CD4-positive, alpha-beta memory T cell (primary cell): ENCODE measurements at regions of chr21 and their contacts with region 1.

Region 1: GRCh38 chr21:28943631-28944030 is 49.0 kb downstream of the LTN1 start:
- DNase-seq: no peak
- H3K4me3 ChIP-seq: no peak overlapping the region
- H3K4me3 Mint-ChIP-seq: no peak overlapping the region
- H3K27ac ChIP-seq: no peak overlapping the region
- H3K27ac Mint-ChIP-seq: no peak overlapping the region
- H3K4me1 ChIP-seq: no peaks in the 10 kb centered on the region
- H3K4me1 Mint-ChIP-seq: no peaks in the 10 kb centered on the region
- H3K27me3 ChIP-seq: no peaks in the 10 kb centered on the region
- H3K27me3 Mint-ChIP-seq: no peaks in the 10 kb centered on the region

Region 2: GRCh38 chr21:28516991-28517592 is 426.5 kb before region 1 on chr21:
- CTCF ChIA-PET with region 1: interaction called, 23 read pairs
- POLR2A ChIA-PET with region 1: no interaction called
- intact Hi-C with region 1: loop called (anchors 1 kb)
- DNase-seq: peak; percentile 53 to 57 (median 55)
- H3K4me3 ChIP-seq: no peak overlapping the region
- H3K4me3 Mint-ChIP-seq: no peak overlapping the region
- H3K27ac ChIP-seq: no peak overlapping the region
- H3K27ac Mint-ChIP-seq: no peak overlapping the region
- H3K4me1 ChIP-seq: no peaks in the 10 kb centered on the region
- H3K4me1 Mint-ChIP-seq: peaks cover 0 to 6% (median under 1%) of the 10 kb centered on the region in 4 donors
- H3K27me3 ChIP-seq: no peaks in the 10 kb centered on the region
- H3K27me3 Mint-ChIP-seq: peaks cover 0 to 1% of the 10 kb centered on the region in 2 donors

Region 3: DNA sequence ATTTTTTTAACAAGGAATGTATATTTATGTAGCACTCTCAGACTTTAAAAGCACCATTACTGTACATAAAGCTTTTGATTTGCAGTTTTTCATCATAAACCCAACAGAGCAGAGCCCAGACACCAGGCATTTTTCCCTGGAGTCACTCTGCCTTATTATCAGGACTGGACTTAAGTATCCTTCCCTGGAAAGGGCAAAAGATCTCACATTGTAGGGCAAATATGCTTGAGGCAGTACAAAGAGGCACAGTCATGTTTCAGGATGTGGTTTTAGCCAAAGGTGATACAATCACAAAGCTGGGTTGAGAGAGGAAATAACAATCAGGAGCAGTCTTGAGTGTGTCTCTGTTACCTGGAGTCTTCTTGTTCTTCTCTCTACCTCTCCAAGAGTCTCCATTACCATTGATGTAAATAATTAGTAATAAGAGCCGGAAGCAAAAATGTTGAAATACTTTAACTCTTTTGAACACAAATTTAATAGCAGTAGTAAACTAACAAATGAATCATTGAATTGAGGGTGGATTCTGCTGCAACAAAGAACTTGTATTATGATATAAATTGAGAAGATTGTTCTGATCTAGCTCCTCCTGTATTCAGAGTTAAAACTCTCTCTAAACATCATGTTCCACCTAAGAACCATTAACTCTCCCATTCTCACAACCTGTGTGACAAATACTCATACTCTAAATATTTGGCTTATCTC is 111.5 kb before region 1 on chr21:
- CTCF ChIA-PET with region 1: no interaction called
- POLR2A ChIA-PET with region 1: no interaction called
- intact Hi-C with region 1: no loop called
- DNase-seq: peak; percentile 39 to 65 (median 52)
- H3K4me3 ChIP-seq: peak overlapping the region in 1 of 2 donors; percentile 36
- H3K4me3 Mint-ChIP-seq: peak overlapping the region; percentile 33 to 89 (median 69)
- H3K27ac ChIP-seq: no peak overlapping the region
- H3K27ac Mint-ChIP-seq: peak overlapping the region; percentile 48 to 89 (median 67)
- H3K4me1 ChIP-seq: peaks cover 82% of the 10 kb centered on the region
- H3K4me1 Mint-ChIP-seq: peaks cover 58 to 83% (median 66%) of the 10 kb centered on the region in 4 donors
- H3K27me3 ChIP-seq: no peaks in the 10 kb centered on the region
- H3K27me3 Mint-ChIP-seq: no peaks in the 10 kb centered on the region

Region 4: GRCh38 chr21:28928578-28929420 is 14.8 kb before region 1 on chr21:
- CTCF ChIA-PET with region 1: interaction called, 10 read pairs
- POLR2A ChIA-PET with region 1: no interaction called
- intact Hi-C with region 1: no loop called
- DNase-seq: no peak
- H3K4me3 ChIP-seq: no peak overlapping the region
- H3K4me3 Mint-ChIP-seq: no peak overlapping the region
- H3K27ac ChIP-seq: no peak overlapping the region
- H3K27ac Mint-ChIP-seq: peak overlapping the region in 2 of 7 donors; percentile 10 to 82
- H3K4me1 ChIP-seq: no peaks in the 10 kb centered on the region
- H3K4me1 Mint-ChIP-seq: peaks cover 0 to 4% (median under 1%) of the 10 kb centered on the region in 4 donors
- H3K27me3 ChIP-seq: no peaks in the 10 kb centered on the region
- H3K27me3 Mint-ChIP-seq: no peaks in the 10 kb centered on the region

Region 5: DNA sequence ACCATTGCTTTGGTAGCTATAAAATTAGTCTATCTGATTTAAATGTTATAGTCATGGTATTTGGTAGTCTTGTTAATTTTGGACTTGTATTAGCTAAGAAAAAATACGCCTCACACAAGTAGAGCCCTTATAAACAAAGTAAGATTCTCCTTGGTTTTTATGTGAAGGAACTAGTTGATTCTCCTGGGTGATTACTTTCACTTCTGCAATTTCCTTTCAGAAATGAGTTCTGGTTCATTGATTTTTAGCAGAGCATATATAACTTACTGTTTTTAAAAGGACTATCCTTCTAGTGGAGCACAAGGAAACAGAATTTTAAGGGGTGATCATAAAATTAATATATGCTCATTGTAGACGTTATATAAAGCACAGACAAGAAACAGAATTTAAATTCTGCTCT is 475.2 kb after region 1 on chr21:
- CTCF ChIA-PET with region 1: no interaction called
- POLR2A ChIA-PET with region 1: no interaction called
- intact Hi-C with region 1: no loop called
- DNase-seq: no peak
- H3K4me3 ChIP-seq: no peak overlapping the region
- H3K4me3 Mint-ChIP-seq: peak overlapping the region in 2 of 8 donors; percentile 26
- H3K27ac ChIP-seq: no peak overlapping the region
- H3K27ac Mint-ChIP-seq: peak overlapping the region in 1 of 7 donors; percentile 15
- H3K4me1 ChIP-seq: no peaks in the 10 kb centered on the region
- H3K4me1 Mint-ChIP-seq: peaks cover 0 to 4% (median 2%) of the 10 kb centered on the region in 4 donors
- H3K27me3 ChIP-seq: no peaks in the 10 kb centered on the region
- H3K27me3 Mint-ChIP-seq: no peaks in the 10 kb centered on the region